Naive thymus-derived CD8-positive, alpha-beta T cell (primary cell): ENCODE measurements at regions of chr13 and their contacts with region 1.

Region 1: DNA sequence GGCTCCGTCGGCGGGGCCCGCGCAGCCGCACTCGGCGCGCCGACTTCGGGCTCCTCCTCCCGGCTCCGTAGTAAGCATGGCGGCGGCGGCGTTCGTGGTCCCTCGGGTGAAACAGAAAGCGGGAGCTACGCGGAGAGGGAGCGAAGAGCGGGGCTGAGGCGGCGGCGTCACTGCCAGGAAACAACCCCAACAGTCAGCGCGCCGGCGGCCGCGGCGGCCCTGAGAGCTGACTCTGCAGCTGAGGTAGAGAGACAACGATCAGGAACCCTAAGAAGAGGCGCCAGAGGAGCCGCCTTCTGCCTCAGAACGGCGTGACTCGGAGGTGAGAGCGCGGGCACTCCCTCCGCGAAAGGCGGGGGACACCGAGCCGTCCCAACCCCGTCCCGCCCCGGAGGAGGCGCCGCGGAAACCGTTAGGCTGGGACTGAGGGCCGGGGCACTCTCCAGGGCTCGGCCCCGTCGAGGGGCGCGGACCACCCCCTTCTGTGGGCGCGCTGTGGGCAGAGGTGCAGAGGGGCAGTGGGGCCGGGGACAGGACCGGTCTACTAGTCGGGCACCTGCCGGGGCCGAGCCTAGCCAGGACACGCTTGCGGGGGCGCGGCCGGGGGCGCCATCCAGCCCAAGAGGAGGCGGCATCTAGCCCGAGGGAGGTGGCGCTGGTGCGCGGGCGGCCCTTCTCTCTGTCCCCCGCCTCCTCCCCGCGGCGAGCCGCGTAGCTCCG is at the start of gene FNDC3A:
- DNase-seq: peak; percentile 78 to 91 (median 85)
- ATAC-seq: peak; percentile 69 to 75
- H3K4me3 Mint-ChIP-seq: peak within 1 kb of the TSS; percentile 93 to 100 (median 96)
- H3K27ac Mint-ChIP-seq: peak within 1 kb of the TSS; percentile 82 to 100 (median 99)
- H3K4me1 Mint-ChIP-seq: peaks cover 20 to 50% (median 42%) of the 10 kb centered on the region in 4 donors
- H3K27me3 Mint-ChIP-seq: no peaks in the 10 kb centered on the region
- polyA plus RNA-seq, gene FNDC3A: 7.9 to 9.7 (median 8.9) TPM

Region 2: DNA sequence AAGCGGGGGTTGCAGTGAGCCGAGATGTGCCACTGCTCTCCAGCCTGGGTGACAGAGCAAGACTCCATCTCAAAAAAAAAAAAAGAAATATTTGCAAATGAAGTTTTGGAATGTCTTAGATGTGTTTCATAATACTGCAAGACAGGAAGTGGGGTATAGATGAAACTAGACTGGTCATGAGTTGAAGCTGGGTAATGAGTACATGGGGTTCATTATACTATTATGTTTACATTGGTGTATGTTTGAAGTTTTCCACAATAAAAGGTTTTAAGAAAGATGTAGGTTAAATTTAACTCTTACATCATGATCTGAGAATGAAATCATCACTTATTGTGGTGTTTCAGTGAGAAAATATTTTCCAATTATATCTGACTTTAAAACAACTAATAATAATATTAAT is 18.7 kb after region 1 on chr13:
- POLR2A ChIA-PET with region 1: interaction called, 10 read pairs
- DNase-seq: no peak
- ATAC-seq: peak in 1 of 2 donors; percentile 37
- H3K4me3 Mint-ChIP-seq: no peak overlapping the region
- H3K27ac Mint-ChIP-seq: peak overlapping the region in 2 of 10 donors; percentile 48 to 53
- H3K4me1 Mint-ChIP-seq: peaks cover 11 to 41% (median 31%) of the 10 kb centered on the region in 4 donors
- H3K27me3 Mint-ChIP-seq: no peaks in the 10 kb centered on the region

Region 3: GRCh38 chr13:49110122-49110912 is 134.3 kb after region 1 on chr13:
- POLR2A ChIA-PET with region 1: interaction called, 12 read pairs
- DNase-seq: peak; percentile 57 to 88 (median 66)
- ATAC-seq: peak; percentile 77 to 81
- H3K4me3 Mint-ChIP-seq: peak overlapping the region; percentile 78 to 95 (median 91)
- H3K27ac Mint-ChIP-seq: peak overlapping the region in 9 of 10 donors; percentile 47 to 96 (median 92)
- H3K4me1 Mint-ChIP-seq: peaks cover 14 to 53% (median 27%) of the 10 kb centered on the region in 4 donors
- H3K27me3 Mint-ChIP-seq: no peaks in the 10 kb centered on the region

Region 4: DNA sequence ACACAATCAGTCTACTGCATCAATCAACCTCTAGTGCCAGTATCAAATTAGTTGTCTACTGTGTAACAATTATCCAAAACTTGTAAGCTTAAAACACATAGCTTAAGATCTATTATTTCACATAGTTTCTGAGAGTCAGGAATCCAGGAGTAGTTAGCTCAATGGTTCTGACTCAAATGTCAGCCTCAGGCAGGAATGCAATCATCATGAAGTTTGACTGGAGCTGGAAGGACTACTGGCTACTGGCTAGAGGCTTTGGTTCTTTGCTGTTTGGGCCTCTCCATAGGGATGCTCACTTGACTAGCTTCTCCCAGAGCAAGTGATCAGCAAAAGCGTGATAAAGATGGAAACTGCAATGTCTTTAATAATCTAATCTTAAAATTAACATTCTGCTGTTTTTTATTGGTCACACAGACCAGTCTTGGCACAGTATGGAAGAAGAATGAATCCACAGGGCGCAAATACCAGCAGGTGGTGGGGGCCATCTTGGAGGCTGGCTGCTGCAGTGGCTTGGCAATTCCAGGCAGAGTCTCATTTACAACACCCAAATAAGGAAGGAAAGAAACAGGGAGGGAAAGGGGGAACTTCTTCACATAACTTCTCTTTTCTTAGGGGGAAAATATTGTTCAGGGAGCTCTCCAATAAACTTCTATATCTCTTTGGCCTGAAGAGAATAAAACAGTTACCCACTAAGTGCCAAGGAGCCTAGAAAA is 452.2 kb after region 1 on chr13:
- POLR2A ChIA-PET with region 1: no interaction called
- DNase-seq: no peak
- ATAC-seq: no peak
- H3K4me3 Mint-ChIP-seq: no peak overlapping the region
- H3K27ac Mint-ChIP-seq: no peak overlapping the region
- H3K4me1 Mint-ChIP-seq: no peaks in the 10 kb centered on the region
- H3K27me3 Mint-ChIP-seq: no peaks in the 10 kb centered on the region